ENCODE measurements at regions of chr6 and their contacts with region 1.

Region 1: GRCh38 chr6:27838058-27838944 is 73.9 kb downstream of the OR2B2 start:
- DNase-seq: peak; percentile 88
- H3K4me3 Mint-ChIP-seq: no peak overlapping the region
- H3K27ac Mint-ChIP-seq: no peak overlapping the region
- H3K4me1 Mint-ChIP-seq: peaks cover 22% of the 10 kb centered on the region
- H3K27me3 Mint-ChIP-seq: peaks cover 6% of the 10 kb centered on the region

Region 2: DNA sequence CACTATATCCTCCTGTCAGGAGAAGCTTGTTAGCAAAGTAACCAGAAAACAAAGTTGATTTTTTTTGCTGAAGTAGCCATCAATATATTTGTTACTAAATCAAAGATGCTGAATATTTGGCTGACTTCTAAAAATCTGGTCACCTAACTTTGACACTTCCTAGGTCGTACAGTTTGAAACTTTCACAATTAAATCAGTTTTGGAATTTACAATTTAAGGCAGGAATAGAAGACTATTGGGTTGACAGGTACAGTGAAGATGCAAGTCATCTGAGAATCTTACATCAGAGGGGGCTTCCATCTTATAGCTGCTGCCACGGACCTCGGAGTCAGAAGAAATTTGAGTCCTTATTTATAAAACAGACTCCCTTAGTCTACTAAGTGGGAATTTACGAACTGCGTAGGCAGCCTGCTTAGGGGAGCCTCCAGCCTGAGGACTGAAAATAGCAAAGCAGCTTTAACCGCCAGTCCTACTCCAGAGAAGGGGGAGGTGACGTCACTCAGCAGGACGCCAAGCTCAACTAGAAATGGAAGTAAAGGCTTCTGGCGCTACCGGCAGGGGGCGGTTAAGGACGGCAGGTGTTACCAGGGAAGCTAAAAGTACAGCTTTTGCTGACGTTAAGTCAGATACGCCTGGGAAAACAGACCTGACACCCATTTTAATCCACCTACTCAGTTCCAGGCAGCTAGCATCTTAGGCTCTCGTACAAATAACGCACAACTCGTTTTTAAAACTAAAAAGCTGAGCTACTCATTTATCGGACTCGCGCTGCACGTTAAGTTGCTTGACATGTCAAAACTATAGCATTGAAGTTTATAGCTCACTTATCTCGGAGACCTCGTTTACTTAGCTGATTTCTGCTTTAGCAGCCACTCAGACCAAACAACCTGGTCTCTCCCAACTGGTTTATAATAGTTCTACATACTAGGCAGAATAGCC is 1812.1 kb before region 1 on chr6:
- CTCF ChIA-PET with region 1: no interaction called
- POLR2A ChIA-PET with region 1: interaction called, 5 read pairs
- intact Hi-C with region 1: loop called (anchors 10 kb)
- DNase-seq: peak; percentile 96
- H3K4me3 Mint-ChIP-seq: peak overlapping the region; percentile 87
- H3K27ac Mint-ChIP-seq: peak overlapping the region; percentile 91
- H3K4me1 Mint-ChIP-seq: peaks cover 53% of the 10 kb centered on the region
- H3K27me3 Mint-ChIP-seq: peaks cover 5% of the 10 kb centered on the region

Region 3: GRCh38 chr6:27795697-27796494 is 42.4 kb before region 1 on chr6:
- CTCF ChIA-PET with region 1: no interaction called
- POLR2A ChIA-PET with region 1: no interaction called
- intact Hi-C with region 1: no loop called
- DNase-seq: peak; percentile 39
- H3K4me3 Mint-ChIP-seq: no peak overlapping the region
- H3K27ac Mint-ChIP-seq: peak overlapping the region; percentile 67
- H3K4me1 Mint-ChIP-seq: peaks cover 22% of the 10 kb centered on the region
- H3K27me3 Mint-ChIP-seq: peaks cover 8% of the 10 kb centered on the region

Region 4: GRCh38 chr6:27825025-27825793 is 13.1 kb before region 1 on chr6:
- CTCF ChIA-PET with region 1: interaction called, 9 read pairs
- POLR2A ChIA-PET with region 1: interaction called, 95 read pairs
- intact Hi-C with region 1: loop called (anchors 1 kb)
- DNase-seq: no peak
- H3K4me3 Mint-ChIP-seq: peak overlapping the region; percentile 87
- H3K27ac Mint-ChIP-seq: peak overlapping the region; percentile 98
- H3K4me1 Mint-ChIP-seq: peaks cover 32% of the 10 kb centered on the region
- H3K27me3 Mint-ChIP-seq: no peaks in the 10 kb centered on the region

Region 5: GRCh38 chr6:27871924-27872638 is 33.8 kb after region 1 on chr6:
- CTCF ChIA-PET with region 1: interaction called, 35 read pairs
- POLR2A ChIA-PET with region 1: interaction called, 429 read pairs
- intact Hi-C with region 1: loop called (anchors 1 kb)
- DNase-seq: peak; percentile 82
- H3K4me3 Mint-ChIP-seq: peak overlapping the region; percentile 81
- H3K27ac Mint-ChIP-seq: peak overlapping the region; percentile 99
- H3K4me1 Mint-ChIP-seq: peaks cover 30% of the 10 kb centered on the region
- H3K27me3 Mint-ChIP-seq: peaks cover 8% of the 10 kb centered on the region

Region 6: GRCh38 chr6:27951040-27951439 is 112.7 kb after region 1 on chr6:
- CTCF ChIA-PET with region 1: no interaction called
- POLR2A ChIA-PET with region 1: no interaction called
- intact Hi-C with region 1: no loop called
- DNase-seq: no peak
- H3K4me3 Mint-ChIP-seq: no peak overlapping the region
- H3K27ac Mint-ChIP-seq: no peak overlapping the region
- H3K4me1 Mint-ChIP-seq: no peaks in the 10 kb centered on the region
- H3K27me3 Mint-ChIP-seq: peaks cover 38% of the 10 kb centered on the region

Region 7: GRCh38 chr6:28863604-28864320 is 1025.5 kb after region 1 on chr6:
- CTCF ChIA-PET with region 1: no interaction called
- POLR2A ChIA-PET with region 1: no interaction called
- intact Hi-C with region 1: loop called (anchors 10 kb)
- DNase-seq: peak; percentile 90
- H3K4me3 Mint-ChIP-seq: peak overlapping the region; percentile 82
- H3K27ac Mint-ChIP-seq: peak overlapping the region; percentile 91
- H3K4me1 Mint-ChIP-seq: peaks cover 38% of the 10 kb centered on the region
- H3K27me3 Mint-ChIP-seq: peaks cover 5% of the 10 kb centered on the region